Left cardiac atrium (tissue), 4 donors: ENCODE measurements at regions of chrX and their contacts with region 1.

Region 1: DNA sequence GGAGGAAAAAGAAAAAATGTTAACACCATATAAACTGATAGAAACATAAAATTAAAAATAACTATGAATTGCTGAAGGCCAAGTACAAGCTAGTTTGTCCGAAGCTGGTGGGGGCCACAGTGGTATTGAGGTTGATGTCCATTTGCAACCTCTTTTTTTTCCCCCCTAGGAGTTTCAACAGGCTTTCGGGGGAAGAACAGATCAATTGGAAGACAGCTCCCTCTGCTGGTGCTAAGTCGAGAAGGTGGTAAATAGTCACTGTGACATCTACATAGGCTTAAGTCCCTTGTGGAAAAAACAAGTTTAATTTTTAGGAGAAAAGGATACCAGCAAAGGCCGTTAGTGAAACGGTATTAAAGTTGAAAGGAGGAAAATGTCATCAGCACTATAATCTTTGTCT is 115.7 kb upstream of the ZXDA start:
- DNase-seq: peak; percentile 22
- ATAC-seq: no peak

Region 2: GRCh38 chrX:57821703-57822375 is 204.1 kb before region 1 on chrX:
- intact Hi-C with region 1: loop called (anchors 5 to 10 kb)
- DNase-seq: no peak
- ATAC-seq: peak; percentile 73 to 79

Region 3: DNA sequence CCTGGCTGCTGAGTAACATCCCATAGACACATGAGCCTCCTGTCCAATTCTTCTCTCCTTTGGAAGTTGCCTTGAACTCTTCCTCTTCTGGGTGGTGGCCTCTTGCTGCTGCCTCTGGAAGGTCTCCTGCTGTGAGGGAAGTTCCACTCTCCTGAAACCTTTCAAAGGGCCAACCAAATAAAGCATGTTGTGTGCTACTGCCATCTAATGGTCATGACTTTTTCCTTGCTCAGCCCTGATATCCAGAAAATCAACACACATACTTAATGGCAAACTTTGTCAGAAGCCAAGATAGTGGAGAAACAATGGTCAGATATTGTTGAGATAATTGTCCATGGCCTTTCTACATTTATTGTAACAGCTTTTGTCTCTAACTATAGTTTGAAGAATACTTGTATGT is 96.6 kb before region 1 on chrX:
- intact Hi-C with region 1: loop called in 1 of 2 experiments (anchors 10 kb)
- DNase-seq: no peak
- ATAC-seq: peak in 1 of 2 donors; percentile 44

Region 4: GRCh38 chrX:57964975-57965374 is 61.0 kb before region 1 on chrX:
- intact Hi-C with region 1: no loop called
- DNase-seq: no peak
- ATAC-seq: no peak